H1 (cell line): ENCODE measurements at regions of chr2 and their contacts with region 1.

Region 1: GRCh38 chr2:222594679-222595078 is 61.2 kb downstream of the FARSB start:
- DNase-seq: no peak
- H3K4me3 ChIP-seq: no peak overlapping the region
- H3K27ac ChIP-seq: no peak overlapping the region
- H3K4me1 ChIP-seq: no peaks in the 10 kb centered on the region
- H3K27me3 ChIP-seq: no peaks in the 10 kb centered on the region
- CTCF ChIP-seq: no peak
- EP300 ChIP-seq: no peak
- POLR2A ChIP-seq: no peak
- RAD21 ChIP-seq: no peak

Region 2: DNA sequence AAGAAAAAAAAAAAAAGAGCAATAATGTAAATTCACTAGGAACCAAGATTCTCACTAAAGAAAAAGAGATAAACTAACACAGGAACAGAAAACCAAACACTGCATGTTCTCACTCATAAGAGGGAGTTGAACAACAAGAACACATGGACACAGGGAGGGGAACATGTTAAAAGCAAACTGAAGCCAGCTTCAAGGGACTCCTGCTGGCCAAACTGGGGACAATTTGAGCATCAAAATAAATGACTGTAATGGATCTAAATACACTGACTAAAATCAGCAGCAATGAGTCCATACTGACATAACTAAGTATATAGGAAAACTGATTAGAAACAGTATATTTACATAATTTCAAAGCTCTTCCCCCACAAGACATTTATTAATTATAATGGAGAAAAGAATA is 11.8 kb before region 1 on chr2:
- CTCF ChIA-PET with region 1: interaction called, 10 read pairs
- POLR2A ChIA-PET with region 1: interaction called, 4 read pairs
- DNase-seq: no peak
- H3K4me3 ChIP-seq: no peak overlapping the region
- H3K27ac ChIP-seq: no peak overlapping the region
- H3K4me1 ChIP-seq: no peaks in the 10 kb centered on the region
- H3K27me3 ChIP-seq: no peaks in the 10 kb centered on the region
- CTCF ChIP-seq: peak in 2 of 3 experiments; percentile 2 to 34; a peak in 1 of 4 replicates
- EP300 ChIP-seq: no peak
- POLR2A ChIP-seq: no peak
- RAD21 ChIP-seq: peak in 1 of 2 experiments; percentile 17; a peak in 2 of 4 replicates

Region 3: DNA sequence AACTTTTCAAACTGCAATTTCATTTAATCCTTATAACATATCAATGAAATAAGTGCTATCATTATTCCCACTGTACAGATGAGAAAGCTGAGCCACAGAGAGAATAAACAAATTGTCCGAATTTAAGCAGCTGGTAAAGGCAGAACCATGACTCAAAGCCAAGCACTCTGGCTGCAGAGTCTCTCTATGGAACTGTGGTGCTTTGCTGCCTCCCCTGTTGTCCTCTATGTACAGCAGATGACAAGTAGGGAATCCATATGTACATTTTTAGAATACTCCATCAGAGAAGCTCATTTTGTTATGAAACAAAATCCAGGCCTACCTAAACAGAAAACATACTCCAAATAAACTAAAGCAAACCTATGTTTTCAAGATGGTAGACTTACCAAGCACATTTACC is 16.1 kb after region 1 on chr2:
- CTCF ChIA-PET with region 1: interaction called, 10 read pairs
- POLR2A ChIA-PET with region 1: no interaction called
- DNase-seq: no peak
- H3K4me3 ChIP-seq: no peak overlapping the region
- H3K27ac ChIP-seq: no peak overlapping the region
- H3K4me1 ChIP-seq: no peaks in the 10 kb centered on the region; a peak in 2 of 7 replicates
- H3K27me3 ChIP-seq: no peaks in the 10 kb centered on the region
- CTCF ChIP-seq: no peak
- EP300 ChIP-seq: no peak
- POLR2A ChIP-seq: no peak
- RAD21 ChIP-seq: no peak